ENCODE measurements at regions of chr5 and their contacts with region 1.

Region 1: DNA sequence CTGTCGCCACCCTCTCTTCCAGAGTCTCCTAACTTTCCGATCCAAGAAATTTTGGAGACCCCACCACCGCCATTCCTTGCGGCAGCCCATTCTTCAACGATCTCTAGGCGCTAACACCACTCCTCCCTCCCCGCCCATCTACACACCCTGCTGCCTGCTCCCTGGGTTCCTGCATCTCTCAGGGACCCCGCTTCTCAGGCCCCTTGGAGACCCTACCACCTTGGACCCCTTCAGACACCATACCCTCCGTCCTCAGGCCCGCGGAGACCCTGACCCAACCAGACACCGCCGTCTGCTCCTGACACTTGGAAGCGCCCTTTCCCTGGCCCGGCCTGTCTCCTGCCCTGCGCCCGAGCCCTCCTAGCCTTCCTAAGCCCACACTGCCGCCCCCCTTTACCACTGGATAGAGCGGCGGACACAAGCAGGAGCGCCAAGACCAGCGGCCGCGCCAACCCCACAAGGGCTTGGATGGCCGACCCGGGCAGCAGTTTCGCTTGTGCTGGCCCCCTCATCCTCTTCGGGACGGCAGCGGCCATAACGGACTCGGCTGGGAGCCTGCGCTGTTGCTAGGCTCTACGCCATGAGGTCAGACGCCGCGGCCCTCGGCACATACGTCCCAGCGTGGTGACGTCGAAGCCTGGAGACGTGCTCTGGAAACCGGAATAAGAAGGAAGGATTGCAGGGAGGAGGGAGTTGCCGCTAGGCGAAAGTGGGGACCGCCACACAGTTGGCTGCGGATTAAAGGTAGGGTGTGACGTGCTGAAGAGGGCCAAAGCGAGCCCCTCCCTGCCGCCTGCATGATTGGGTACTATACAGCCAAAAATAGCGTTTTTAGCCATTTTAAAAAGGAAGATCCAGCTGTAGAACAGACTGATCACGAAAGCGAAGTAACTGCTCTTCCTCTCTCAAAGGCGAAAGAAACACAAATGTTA is at the start of gene C5orf15:
- DNase-seq: peak; percentile 98
- H3K4me3 ChIP-seq: peak within 1 kb of the TSS; percentile 71 to 85 (median 76)
- H3K27ac ChIP-seq: peak within 1 kb of the TSS; percentile 88 to 92 (median 92)
- H3K4me1 ChIP-seq: peaks cover 0 to 28% (median 20%) of the 10 kb centered on the region in 4 donors
- H3K27me3 ChIP-seq: no peaks in the 10 kb centered on the region
- CTCF ChIP-seq: peak in 3 of 4 experiments; percentile 21 to 37 (median 22)
- EP300 ChIP-seq: peak in 1 of 4 donors; percentile 15
- POLR2A ChIP-seq: peak; percentile 68 to 73
- total RNA-seq, gene C5orf15: 22.8 to 38.5 (median 30.9) TPM

Region 2: DNA sequence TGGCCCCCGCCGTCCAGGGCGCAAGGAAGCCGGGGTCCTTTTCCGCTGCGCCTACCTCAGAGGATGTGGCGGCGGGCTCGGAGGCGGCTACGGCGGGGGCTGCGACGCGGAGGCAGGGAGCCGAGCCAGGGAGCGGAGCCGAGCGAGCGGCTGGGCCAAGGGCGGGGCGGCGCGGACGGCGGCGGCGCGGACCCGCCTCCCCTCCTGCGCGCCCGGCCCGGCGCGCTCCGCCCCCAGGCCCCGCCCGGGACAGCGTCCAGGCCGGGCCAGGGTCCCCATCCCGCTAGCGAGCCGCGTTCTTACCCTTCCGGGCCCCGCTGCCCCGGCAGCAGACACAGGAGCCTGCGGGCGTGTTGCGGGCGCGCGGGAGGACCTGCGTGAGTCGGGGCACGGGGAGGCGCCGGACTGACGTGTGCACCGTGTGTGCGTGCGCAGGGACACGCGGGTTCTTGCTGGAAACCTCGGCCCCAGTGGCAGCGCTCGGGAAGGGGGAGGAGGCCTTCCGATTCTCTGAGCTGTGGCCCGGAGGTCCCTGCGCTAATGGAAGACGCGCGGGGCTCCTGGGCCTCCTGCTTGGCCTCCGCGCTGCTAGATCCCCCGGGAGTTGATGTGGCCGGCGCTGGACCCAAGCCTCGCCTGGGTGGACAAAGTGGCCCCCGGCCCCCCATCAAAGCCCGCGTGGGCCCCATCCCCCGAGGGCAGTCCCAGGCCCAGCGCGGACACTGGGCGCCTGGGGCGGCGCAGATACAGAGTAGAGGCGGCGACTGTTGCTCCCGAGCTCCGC is 36.5 kb after region 1 on chr5 and contains the start of gene VDAC1:
- intact Hi-C with region 1: loop called (anchors 1 kb)
- DNase-seq: peak; percentile 94
- H3K4me3 ChIP-seq: peak within 1 kb of the TSS; percentile 64 to 96 (median 86)
- H3K27ac ChIP-seq: peak within 1 kb of the TSS; percentile 98 to 100 (median 98)
- H3K4me1 ChIP-seq: peaks cover 0 to 54% (median 47%) of the 10 kb centered on the region in 4 donors
- H3K27me3 ChIP-seq: no peaks in the 10 kb centered on the region
- CTCF ChIP-seq: no peak
- EP300 ChIP-seq: peak in 2 of 4 donors; percentile 9 to 26
- POLR2A ChIP-seq: peak; percentile 53 to 54
- total RNA-seq, gene VDAC1: 71.3 to 99.2 (median 78.9) TPM

Region 3: DNA sequence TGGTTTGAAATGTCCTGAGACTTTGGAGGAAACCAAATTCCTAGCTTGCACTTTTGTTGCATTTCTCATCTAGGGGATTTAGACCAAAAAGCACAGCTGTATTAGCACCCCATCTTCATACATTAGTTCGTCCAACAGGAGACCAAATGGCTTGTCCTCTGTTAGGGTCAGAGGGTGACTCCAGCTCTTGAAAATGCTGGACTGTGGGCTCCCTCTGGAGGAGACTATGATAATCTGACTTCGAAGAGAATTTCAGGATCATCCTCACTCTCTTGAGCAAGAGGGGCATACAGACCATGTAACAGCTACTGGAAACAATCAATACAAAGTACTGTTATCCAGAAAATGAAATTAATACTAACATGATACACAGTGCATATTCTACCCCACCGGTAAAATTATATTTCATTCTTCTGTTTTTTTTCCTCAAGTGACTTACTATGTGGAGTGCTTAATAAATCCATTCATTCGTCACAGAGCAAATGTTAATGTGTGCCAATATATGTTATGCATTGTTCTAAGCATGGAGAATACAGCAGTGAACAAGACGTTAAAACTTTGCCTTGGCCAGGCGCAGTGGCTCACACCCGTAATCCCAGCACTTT is 321.3 kb after region 1 on chr5:
- intact Hi-C with region 1: no loop called
- DNase-seq: peak; percentile 66
- H3K4me3 ChIP-seq: no peak overlapping the region
- H3K27ac ChIP-seq: no peak overlapping the region
- H3K4me1 ChIP-seq: no peaks in the 10 kb centered on the region
- H3K27me3 ChIP-seq: no peaks in the 10 kb centered on the region
- CTCF ChIP-seq: peak; percentile 47 to 81 (median 70)
- EP300 ChIP-seq: no peak
- POLR2A ChIP-seq: no peak